Dendritic cell treated with granulocyte-macrophage colony-stimulating factor and Interleukin-4, amounts not matched to agents 40 ng/mL and 50 ng/mL, for 4 days (primary cell): ENCODE measurements at regions of chr3 and their contacts with region 1.

Region 1: GRCh38 chr3:100360757-100361496 is 26.4 kb downstream of the NIT2 start:
- H3K4me3 Mint-ChIP-seq: no peak overlapping the region
- H3K27ac Mint-ChIP-seq: no peak overlapping the region
- H3K4me1 Mint-ChIP-seq: no peaks in the 10 kb centered on the region
- H3K27me3 Mint-ChIP-seq: no peaks in the 10 kb centered on the region

Region 2: GRCh38 chr3:100244264-100244663 is 116.7 kb before region 1 on chr3:
- intact Hi-C with region 1: no loop called
- H3K4me3 Mint-ChIP-seq: no peak overlapping the region
- H3K27ac Mint-ChIP-seq: no peak overlapping the region
- H3K4me1 Mint-ChIP-seq: no peaks in the 10 kb centered on the region
- H3K27me3 Mint-ChIP-seq: no peaks in the 10 kb centered on the region

Region 3: GRCh38 chr3:100306695-100307094 is 54.2 kb before region 1 on chr3:
- intact Hi-C with region 1: loop called (anchors 10 kb)
- H3K4me3 Mint-ChIP-seq: no peak overlapping the region
- H3K27ac Mint-ChIP-seq: no peak overlapping the region
- H3K4me1 Mint-ChIP-seq: no peaks in the 10 kb centered on the region
- H3K27me3 Mint-ChIP-seq: no peaks in the 10 kb centered on the region